ENCODE measurements at regions of chr12 and their contacts with region 1.

Region 1: GRCh38 chr12:8544295-8544694 is 3.6 kb upstream of the CLEC4E start:
- DNase-seq: peak; percentile 43
- H3K4me3 Mint-ChIP-seq: no peak overlapping the region
- H3K27ac Mint-ChIP-seq: no peak overlapping the region
- H3K4me1 Mint-ChIP-seq: no peaks in the 10 kb centered on the region
- H3K27me3 Mint-ChIP-seq: peaks cover 31% of the 10 kb centered on the region

Region 2: DNA sequence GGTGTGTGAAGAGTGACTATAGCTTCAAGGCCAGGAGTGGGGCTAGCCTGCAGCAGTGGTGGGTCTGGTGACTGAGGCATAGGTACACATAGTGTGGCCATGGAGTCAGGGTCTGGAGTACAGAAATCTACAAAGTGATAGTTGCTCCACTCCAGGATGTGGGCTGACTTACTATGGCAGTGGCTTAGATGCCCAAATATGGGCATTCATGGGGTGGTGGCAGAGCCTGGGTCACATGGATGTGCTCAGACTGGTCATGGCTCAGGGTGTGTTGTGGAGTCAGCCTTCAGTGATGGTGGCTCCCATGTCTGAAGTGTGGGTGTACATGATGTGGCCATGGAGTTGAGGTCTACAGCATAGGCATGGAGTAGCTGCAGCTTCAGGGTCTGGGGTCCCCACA is 61.2 kb before region 1 on chr12:
- intact Hi-C with region 1: no loop called
- DNase-seq: no peak
- H3K4me3 Mint-ChIP-seq: no peak overlapping the region
- H3K27ac Mint-ChIP-seq: no peak overlapping the region
- H3K4me1 Mint-ChIP-seq: peaks cover 2% of the 10 kb centered on the region
- H3K27me3 Mint-ChIP-seq: peaks cover 25% of the 10 kb centered on the region

Region 3: GRCh38 chr12:8572507-8572906 is 28.2 kb after region 1 on chr12:
- intact Hi-C with region 1: no loop called
- DNase-seq: no peak
- H3K4me3 Mint-ChIP-seq: no peak overlapping the region
- H3K27ac Mint-ChIP-seq: no peak overlapping the region
- H3K4me1 Mint-ChIP-seq: no peaks in the 10 kb centered on the region
- H3K27me3 Mint-ChIP-seq: peaks cover 6% of the 10 kb centered on the region

Region 4: GRCh38 chr12:8658346-8658745 is 114.1 kb after region 1 on chr12:
- intact Hi-C with region 1: loop called (anchors 10 kb)
- DNase-seq: no peak
- H3K4me3 Mint-ChIP-seq: no peak overlapping the region
- H3K27ac Mint-ChIP-seq: no peak overlapping the region
- H3K4me1 Mint-ChIP-seq: no peaks in the 10 kb centered on the region
- H3K27me3 Mint-ChIP-seq: peaks cover 16% of the 10 kb centered on the region

Measured in activated T-helper 2 cell treated with anti-CD3 and anti-CD28 coated beads, Interferon-gamma antibody, Interleukin-2, Interleukin-4, amounts not matched to agents 10 μg/mL and 5 μg/mL and 100 μg/mL, durations not matched to agents 14 hours and 24 hours and 36 hours (primary cell).